CD4-positive, alpha-beta memory T cell (primary cell): ENCODE measurements at regions of chr10 and their contacts with region 1.

Region 1: DNA sequence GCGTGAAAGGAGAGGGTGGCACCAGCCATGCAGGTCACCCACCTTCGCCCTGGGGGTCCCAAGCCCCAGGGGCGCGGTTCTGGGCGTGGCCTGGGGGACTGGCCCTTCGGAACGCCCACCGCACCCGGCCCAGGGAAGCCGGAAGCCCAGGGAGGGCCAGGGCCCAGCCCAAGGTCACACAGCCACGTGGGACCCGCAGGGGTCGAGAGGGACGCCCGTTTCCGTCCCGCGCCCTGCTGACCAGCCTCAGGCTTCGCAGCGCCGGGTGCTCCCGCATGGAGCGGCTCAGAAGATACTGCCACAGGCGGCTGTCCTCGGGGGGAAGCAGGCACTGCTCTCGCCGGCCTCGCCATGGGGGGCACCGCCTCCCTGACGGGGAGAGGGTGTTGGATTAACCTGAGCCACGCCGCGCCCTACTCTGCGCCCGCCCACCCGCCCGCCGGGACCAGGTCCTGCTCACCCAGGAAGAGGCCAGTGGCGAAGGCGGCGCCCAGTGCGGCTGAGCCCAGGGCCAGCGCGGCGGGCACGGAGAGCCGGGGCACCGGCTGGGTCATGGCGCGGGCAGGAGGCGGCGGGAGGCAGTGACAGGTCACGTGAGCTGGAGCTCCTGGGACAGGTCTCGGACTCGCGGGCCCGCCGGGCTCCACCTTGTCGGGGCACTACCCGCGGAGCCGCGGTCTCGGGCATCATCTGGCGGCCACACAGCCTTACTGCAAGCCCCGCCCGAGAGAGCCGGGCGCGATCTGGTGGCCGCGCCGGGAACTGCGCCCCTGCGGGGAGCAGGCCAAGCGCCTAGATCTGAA is at the start of gene COMTD1:
- DNase-seq: peak; percentile 91 to 95 (median 92)
- H3K4me3 ChIP-seq: peak within 1 kb of the TSS; percentile 52 to 68
- H3K4me3 Mint-ChIP-seq: peak within 1 kb of the TSS; percentile 74 to 87 (median 84)
- H3K27ac ChIP-seq: peak within 1 kb of the TSS; percentile 45
- H3K27ac Mint-ChIP-seq: peak within 1 kb of the TSS; percentile 80 to 99 (median 91)
- H3K4me1 ChIP-seq: peaks cover 18% of the 10 kb centered on the region
- H3K4me1 Mint-ChIP-seq: peaks cover 5 to 36% (median 18%) of the 10 kb centered on the region in 4 donors
- H3K27me3 ChIP-seq: no peaks in the 10 kb centered on the region
- H3K27me3 Mint-ChIP-seq: no peaks in the 10 kb centered on the region
- total RNA-seq, gene COMTD1: 12.7 to 15.4 TPM

Region 2: DNA sequence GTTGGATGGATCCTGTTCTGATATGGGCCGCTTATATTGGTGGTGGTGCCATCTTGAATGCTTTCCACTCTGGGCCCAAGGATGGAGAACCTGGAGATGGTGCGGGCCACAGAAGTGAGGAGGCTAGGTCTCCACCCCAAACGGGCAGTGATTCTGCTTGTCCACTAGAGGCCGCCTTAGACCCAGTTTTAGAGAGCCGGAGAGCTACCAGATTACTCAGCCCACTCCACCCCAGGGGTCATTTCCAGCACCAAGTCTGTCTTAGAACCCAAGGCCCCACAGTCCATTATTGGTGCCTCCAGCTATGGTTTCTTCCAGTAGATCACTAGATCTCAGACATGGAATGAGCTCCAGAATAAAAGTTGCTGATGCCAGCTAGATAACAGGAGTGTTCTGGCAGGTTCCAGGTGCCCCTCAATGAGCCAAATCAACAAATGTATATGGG is 1349.5 kb before region 1 on chr10:
- CTCF ChIA-PET with region 1: no interaction called
- POLR2A ChIA-PET with region 1: no interaction called
- intact Hi-C with region 1: loop called (anchors 1 kb)
- DNase-seq: peak; percentile 67 to 76 (median 68)
- H3K4me3 ChIP-seq: no peak overlapping the region
- H3K4me3 Mint-ChIP-seq: peak overlapping the region in 1 of 8 donors; percentile 22
- H3K27ac ChIP-seq: no peak overlapping the region
- H3K27ac Mint-ChIP-seq: peak overlapping the region in 3 of 7 donors; percentile 64 to 70 (median 65)
- H3K4me1 ChIP-seq: peaks cover 9% of the 10 kb centered on the region
- H3K4me1 Mint-ChIP-seq: peaks cover 5 to 9% (median 6%) of the 10 kb centered on the region in 4 donors
- H3K27me3 ChIP-seq: no peaks in the 10 kb centered on the region
- H3K27me3 Mint-ChIP-seq: no peaks in the 10 kb centered on the region

Region 3: DNA sequence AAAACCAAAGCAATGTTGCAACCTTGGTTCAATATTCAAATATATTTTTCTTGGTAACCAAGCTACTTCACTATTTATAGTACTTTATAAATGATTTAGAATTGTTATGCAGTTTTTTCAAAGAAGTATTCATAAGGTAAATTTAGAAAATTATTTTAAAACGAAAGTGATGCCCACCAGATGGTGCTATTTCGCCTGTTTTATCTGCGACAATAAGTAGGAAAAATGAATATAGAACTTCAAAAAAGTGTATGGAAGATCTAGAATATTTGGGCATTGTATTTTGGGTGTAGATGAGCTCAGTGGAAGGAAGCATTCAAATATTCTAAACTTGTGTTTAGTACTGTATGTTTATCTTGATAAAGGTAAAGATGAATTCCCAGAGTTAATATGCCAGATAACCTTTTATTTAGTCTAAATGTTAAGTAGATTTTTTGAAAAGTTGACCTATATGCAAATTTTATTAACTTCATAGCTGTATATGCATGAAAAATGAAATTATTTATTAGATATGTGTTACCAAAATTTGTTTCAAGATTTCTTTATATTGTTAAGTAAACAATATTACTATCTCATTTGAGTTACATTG is 991.4 kb before region 1 on chr10:
- CTCF ChIA-PET with region 1: interaction called, 11 read pairs
- POLR2A ChIA-PET with region 1: no interaction called
- intact Hi-C with region 1: loop called (anchors 1 kb)
- DNase-seq: peak in 4 of 5 donors; percentile 33 to 39 (median 37)
- H3K4me3 ChIP-seq: no peak overlapping the region
- H3K4me3 Mint-ChIP-seq: no peak overlapping the region
- H3K27ac ChIP-seq: no peak overlapping the region
- H3K27ac Mint-ChIP-seq: no peak overlapping the region
- H3K4me1 ChIP-seq: no peaks in the 10 kb centered on the region
- H3K4me1 Mint-ChIP-seq: peaks cover 0 to 9% (median 1%) of the 10 kb centered on the region in 4 donors
- H3K27me3 ChIP-seq: no peaks in the 10 kb centered on the region
- H3K27me3 Mint-ChIP-seq: no peaks in the 10 kb centered on the region

Region 4: GRCh38 chr10:74419958-74420375 is 815.6 kb before region 1 on chr10:
- CTCF ChIA-PET with region 1: interaction called, 8 read pairs
- POLR2A ChIA-PET with region 1: no interaction called
- intact Hi-C with region 1: loop called (anchors 5 kb)
- DNase-seq: peak in 4 of 5 donors; percentile 31 to 44 (median 40)
- H3K4me3 ChIP-seq: no peak overlapping the region
- H3K4me3 Mint-ChIP-seq: no peak overlapping the region
- H3K27ac ChIP-seq: no peak overlapping the region
- H3K27ac Mint-ChIP-seq: peak overlapping the region in 2 of 7 donors; percentile 4 to 20
- H3K4me1 ChIP-seq: no peaks in the 10 kb centered on the region
- H3K4me1 Mint-ChIP-seq: peaks cover 5 to 11% (median 6%) of the 10 kb centered on the region in 4 donors
- H3K27me3 ChIP-seq: no peaks in the 10 kb centered on the region
- H3K27me3 Mint-ChIP-seq: no peaks in the 10 kb centered on the region

Region 5: GRCh38 chr10:75111367-75111906 is 124.1 kb before region 1 on chr10 and contains the start of gene SAMD8:
- CTCF ChIA-PET with region 1: interaction called, 10 read pairs
- POLR2A ChIA-PET with region 1: interaction called, 20 read pairs
- intact Hi-C with region 1: loop called (anchors 1 kb)
- DNase-seq: peak; percentile 93 to 97 (median 95)
- H3K4me3 ChIP-seq: peak within 1 kb of the TSS; percentile 61 to 88
- H3K4me3 Mint-ChIP-seq: peak within 1 kb of the TSS; percentile 86 to 98 (median 90)
- H3K27ac ChIP-seq: peak within 1 kb of the TSS; percentile 92
- H3K27ac Mint-ChIP-seq: peak within 1 kb of the TSS; percentile 92 to 97 (median 97)
- H3K4me1 ChIP-seq: peaks cover 42% of the 10 kb centered on the region
- H3K4me1 Mint-ChIP-seq: peaks cover 27 to 60% (median 48%) of the 10 kb centered on the region in 4 donors
- H3K27me3 ChIP-seq: no peaks in the 10 kb centered on the region
- H3K27me3 Mint-ChIP-seq: no peaks in the 10 kb centered on the region
- total RNA-seq, gene SAMD8: 17.9 to 20.6 TPM

Region 6: GRCh38 chr10:75210282-75211006 is 25.1 kb before region 1 on chr10 and contains the start of gene VDAC2:
- CTCF ChIA-PET with region 1: interaction called, 134 read pairs
- POLR2A ChIA-PET with region 1: interaction called, 284 read pairs
- intact Hi-C with region 1: loop called (anchors 1 kb)
- DNase-seq: peak; percentile 94 to 100 (median 98)
- H3K4me3 ChIP-seq: peak within 1 kb of the TSS; percentile 96 to 100
- H3K4me3 Mint-ChIP-seq: peak within 1 kb of the TSS; percentile 98 to 100 (median 100)
- H3K27ac ChIP-seq: peak within 1 kb of the TSS; percentile 97
- H3K27ac Mint-ChIP-seq: peak within 1 kb of the TSS; percentile 96 to 100 (median 100)
- H3K4me1 ChIP-seq: peaks cover 31% of the 10 kb centered on the region
- H3K4me1 Mint-ChIP-seq: peaks cover 18 to 35% (median 26%) of the 10 kb centered on the region in 4 donors
- H3K27me3 ChIP-seq: no peaks in the 10 kb centered on the region
- H3K27me3 Mint-ChIP-seq: no peaks in the 10 kb centered on the region
- total RNA-seq, gene VDAC2: 76.9 to 79.0 TPM

Region 7: DNA sequence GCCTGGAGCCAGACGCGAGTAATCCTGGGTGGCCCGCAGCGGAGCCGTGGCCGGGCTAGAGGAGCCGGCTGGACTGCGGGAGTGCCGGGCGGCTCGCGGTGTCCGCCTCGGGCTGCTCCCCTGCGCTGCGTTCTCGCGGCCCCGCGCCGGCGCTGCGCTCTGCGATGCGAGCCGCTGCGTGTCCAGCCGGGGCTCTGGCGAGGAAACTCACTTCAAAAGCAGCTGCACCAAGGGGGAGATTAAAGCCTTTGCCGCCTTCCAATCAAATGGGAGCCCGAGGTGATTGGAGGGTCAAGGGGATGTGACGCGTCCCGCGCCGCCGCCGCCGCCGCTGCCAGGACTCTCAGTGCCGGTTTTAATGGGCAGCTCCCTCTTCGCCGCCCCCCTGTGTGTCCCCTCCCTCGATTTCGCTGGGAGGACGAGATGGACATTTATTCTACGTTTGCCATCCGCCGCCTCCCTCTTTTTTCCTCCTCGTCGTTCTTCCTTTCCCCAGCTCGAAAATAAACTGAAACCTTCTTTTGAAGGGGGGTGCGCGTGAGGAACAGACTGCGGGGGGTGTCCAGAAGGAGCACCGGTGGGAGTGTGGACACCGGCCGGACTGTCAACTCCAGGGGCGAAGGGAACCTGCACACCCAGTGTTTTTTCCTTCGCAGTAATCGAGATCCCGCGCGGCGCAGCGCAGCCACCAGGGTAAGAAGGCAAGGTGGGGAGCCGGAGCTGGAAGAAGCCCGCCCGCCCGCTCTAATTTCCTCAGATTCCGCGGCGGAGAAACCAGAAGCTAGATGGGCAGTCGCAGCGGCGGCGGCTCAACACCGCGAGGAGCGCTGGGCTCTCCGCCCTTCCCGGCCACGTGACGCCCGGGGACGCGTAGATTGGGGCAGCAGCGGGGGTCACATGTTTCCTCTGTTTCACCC is 166.3 kb after region 1 on chr10 and contains the start of gene ZNF503:
- CTCF ChIA-PET with region 1: no interaction called
- POLR2A ChIA-PET with region 1: no interaction called
- intact Hi-C with region 1: no loop called
- DNase-seq: no peak
- H3K4me3 ChIP-seq: peak within 1 kb of the TSS; percentile 36 to 66
- H3K4me3 Mint-ChIP-seq: peak within 1 kb of the TSS; percentile 82 to 95 (median 86)
- H3K27ac ChIP-seq: no peak within 1 kb of the TSS
- H3K27ac Mint-ChIP-seq: no peak within 1 kb of the TSS
- H3K4me1 ChIP-seq: peaks cover 25% of the 10 kb centered on the region
- H3K4me1 Mint-ChIP-seq: peaks cover 10 to 34% (median 26%) of the 10 kb centered on the region in 4 donors
- H3K27me3 ChIP-seq: peaks cover 26% of the 10 kb centered on the region
- H3K27me3 Mint-ChIP-seq: peaks cover 43 to 48% of the 10 kb centered on the region in 2 donors
- total RNA-seq, gene ZNF503: 0.12 TPM in 1 of 2 experiments, not detected in the other